Tibial artery (tissue), 4 donors: ENCODE measurements at regions of chr3 and their contacts with region 1.

Region 1: GRCh38 chr3:195102609-195103467 is 168.1 kb downstream of the XXYLT1 start:
- DNase-seq: peak in 1 of 2 donors; percentile 64
- H3K4me3 ChIP-seq: no peak overlapping the region
- H3K27ac ChIP-seq: no peak overlapping the region
- H3K4me1 ChIP-seq: peaks cover 0 to 10% (median 6%) of the 10 kb centered on the region in 4 donors
- H3K27me3 ChIP-seq: no peaks in the 10 kb centered on the region
- CTCF ChIP-seq: no peak

Region 2: GRCh38 chr3:195117978-195118581 is 15.2 kb after region 1 on chr3:
- intact Hi-C with region 1: no loop called
- DNase-seq: no peak
- H3K4me3 ChIP-seq: no peak overlapping the region
- H3K27ac ChIP-seq: no peak overlapping the region
- H3K4me1 ChIP-seq: no peaks in the 10 kb centered on the region
- H3K27me3 ChIP-seq: no peaks in the 10 kb centered on the region
- CTCF ChIP-seq: no peak

Region 3: GRCh38 chr3:195259475-195260279 is 156.8 kb after region 1 on chr3:
- intact Hi-C with region 1: loop called (anchors 2 kb)
- DNase-seq: peak; percentile 91 to 93
- H3K4me3 ChIP-seq: peak overlapping the region; percentile 53 to 63
- H3K27ac ChIP-seq: peak overlapping the region; percentile 61 to 74
- H3K4me1 ChIP-seq: peaks cover 0 to 31% (median 14%) of the 10 kb centered on the region in 4 donors
- H3K27me3 ChIP-seq: no peaks in the 10 kb centered on the region
- CTCF ChIP-seq: peak; percentile 46 to 99